Motor neuron (in vitro differentiated cells): ENCODE measurements at regions of chr3 and their contacts with region 1.

Region 1: DNA sequence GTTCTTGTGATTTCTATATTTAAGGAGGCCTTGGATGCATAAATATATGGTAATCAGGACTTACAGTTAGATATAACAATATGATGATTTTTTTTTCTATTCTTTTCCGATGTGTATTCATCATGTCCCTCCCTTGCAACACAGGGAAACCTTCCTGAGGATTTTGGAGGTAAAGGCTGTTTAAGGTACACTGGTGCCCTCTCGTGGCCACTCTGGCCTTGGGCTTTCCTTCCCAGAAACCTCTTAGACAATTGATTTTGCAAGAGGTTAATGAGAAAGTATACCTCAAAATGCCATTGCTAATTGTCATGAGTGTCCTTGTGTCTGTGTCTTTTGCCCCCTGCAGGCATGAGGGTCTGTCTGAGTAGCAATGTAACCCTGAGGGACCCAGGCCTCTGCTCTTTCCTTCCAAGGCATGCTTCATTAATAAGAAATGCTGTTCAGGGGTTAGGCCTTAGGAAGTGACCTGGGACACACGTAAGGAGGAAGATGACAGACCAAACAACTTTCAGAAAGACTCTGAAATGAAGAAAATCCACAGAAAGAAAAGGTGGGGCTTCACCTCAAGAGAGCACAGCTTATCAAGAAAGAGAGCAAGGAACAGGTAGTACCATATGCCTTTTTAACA is 70.3 kb upstream of the PPP2R3A start:
- ATAC-seq: peak; percentile 73 to 82 (median 80)
- H3K4me3 ChIP-seq: no peak overlapping the region
- H3K27ac ChIP-seq: no peak overlapping the region
- H3K4me1 ChIP-seq: peaks cover 10 to 11% of the 10 kb centered on the region in 2 donors

Region 2: DNA sequence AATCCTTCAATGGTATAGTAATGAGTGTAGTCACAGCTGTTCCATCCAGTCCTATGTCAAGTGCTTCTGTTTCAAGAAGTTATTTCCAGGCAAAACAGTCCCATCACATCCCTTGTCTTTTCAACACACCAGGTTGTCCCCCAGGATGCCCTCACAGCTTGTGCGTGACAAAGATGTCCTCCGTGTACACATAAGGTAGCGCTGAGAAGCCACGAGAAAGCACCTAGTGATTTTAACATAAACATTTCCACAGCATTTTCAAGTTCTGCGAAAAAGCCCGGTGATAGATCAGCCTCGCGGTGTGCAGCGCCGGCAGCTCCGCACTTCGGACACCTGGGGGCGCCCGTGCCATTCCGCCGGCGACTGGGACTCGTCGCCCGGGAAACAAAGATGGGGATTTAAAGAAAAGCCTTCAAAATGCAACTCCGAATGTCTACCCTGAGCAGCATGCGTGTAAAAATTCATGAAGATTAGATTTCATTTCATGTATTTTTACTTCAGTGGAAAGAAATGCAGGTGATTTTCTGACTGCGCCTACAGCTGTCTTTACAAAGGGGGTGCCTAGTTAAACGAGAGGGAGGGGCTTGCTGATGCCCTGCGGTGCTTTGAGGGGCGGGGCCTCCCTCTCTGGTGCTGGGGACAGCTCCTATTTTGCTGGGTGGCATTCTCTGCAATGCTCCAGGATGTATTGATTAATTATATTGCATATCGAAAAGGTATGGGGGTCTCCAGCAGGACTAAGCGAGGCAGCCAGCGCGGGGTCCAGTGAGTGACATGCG is 1294.3 kb before region 1 on chr3:
- in situ Hi-C with region 1: loop called in 1 of 9 experiments (anchors 25 kb)
- ATAC-seq: peak; percentile 38 to 95 (median 56)
- H3K4me3 ChIP-seq: peak overlapping the region in 3 of 5 donors; percentile 10 to 25 (median 12)
- H3K27ac ChIP-seq: peak overlapping the region in 1 of 2 donors; percentile 7
- H3K4me1 ChIP-seq: peaks cover 21 to 22% of the 10 kb centered on the region in 2 donors

Region 3: GRCh38 chr3:135736740-135737139 is 158.5 kb before region 1 on chr3:
- in situ Hi-C with region 1: loop called in 1 of 9 experiments (anchors 25 kb)
- ATAC-seq: peak in 3 of 8 experiments; percentile 46 to 77 (median 52)
- H3K4me3 ChIP-seq: no peak overlapping the region
- H3K27ac ChIP-seq: no peak overlapping the region
- H3K4me1 ChIP-seq: peaks cover 27 to 29% of the 10 kb centered on the region in 2 donors